Colonic mucosa (tissue), 4 donors: ENCODE measurements at regions of chr19 and their contacts with region 1.

Region 1: GRCh38 chr19:35468637-35469036 is 20.6 kb downstream of the FFAR2 start:
- DNase-seq: peak; percentile 45
- H3K4me3 ChIP-seq: no peak overlapping the region
- H3K27ac ChIP-seq: no peak overlapping the region
- H3K4me1 ChIP-seq: no peaks in the 10 kb centered on the region
- H3K27me3 ChIP-seq: no peaks in the 10 kb centered on the region
- CTCF ChIP-seq: peak; percentile 57

Region 2: DNA sequence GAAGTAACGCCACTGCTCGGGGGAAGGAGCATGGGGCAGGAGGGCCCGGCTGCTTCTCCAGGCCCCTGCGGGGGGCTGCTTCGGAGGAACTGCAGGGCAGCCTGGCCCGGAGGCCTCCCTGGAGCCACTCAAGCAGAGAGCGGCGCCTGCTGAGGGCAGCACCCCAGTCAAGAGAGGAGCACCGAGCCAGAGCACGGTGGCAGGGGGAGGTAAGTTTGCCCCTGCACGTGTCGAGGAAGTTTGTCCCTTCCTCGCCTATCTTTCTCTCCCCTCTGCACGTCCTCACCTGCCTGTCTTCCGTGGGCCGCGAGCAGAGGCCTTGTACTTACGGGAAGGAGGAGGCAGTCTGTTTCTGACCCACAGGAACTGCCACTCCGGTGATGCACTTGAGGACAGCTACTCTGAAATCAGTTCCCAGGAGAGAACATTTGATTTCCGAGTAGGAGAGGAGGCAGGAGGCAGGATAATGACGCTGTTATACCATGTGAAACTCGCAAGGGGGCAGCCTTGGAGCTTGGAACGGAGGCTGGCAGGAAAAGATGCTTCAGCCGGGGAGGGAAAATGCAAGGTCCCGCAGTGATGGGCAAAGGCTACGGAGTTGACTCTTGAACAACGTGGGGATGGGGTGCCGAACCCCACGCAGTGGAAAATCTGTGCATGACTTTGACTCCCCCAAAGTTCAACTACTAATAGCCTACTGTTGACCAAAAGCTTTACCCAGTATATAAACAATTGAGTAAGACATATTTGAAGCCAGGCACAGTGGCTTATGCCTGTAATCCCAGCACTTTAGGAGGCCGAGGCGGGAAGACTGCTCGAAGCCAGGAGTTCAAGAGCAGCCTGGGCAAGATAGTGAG is 116.0 kb before region 1 on chr19:
- intact Hi-C with region 1: loop called (anchors 2 kb)
- DNase-seq: peak; percentile 74
- H3K4me3 ChIP-seq: no peak overlapping the region
- H3K27ac ChIP-seq: no peak overlapping the region
- H3K4me1 ChIP-seq: no peaks in the 10 kb centered on the region
- H3K27me3 ChIP-seq: no peaks in the 10 kb centered on the region
- CTCF ChIP-seq: peak; percentile 64

Region 3: GRCh38 chr19:35421362-35421761 is 47.3 kb before region 1 on chr19:
- intact Hi-C with region 1: loop called (anchors 5 kb)
- DNase-seq: no peak
- H3K4me3 ChIP-seq: no peak overlapping the region
- H3K27ac ChIP-seq: no peak overlapping the region
- H3K4me1 ChIP-seq: peaks cover 7% of the 10 kb centered on the region
- H3K27me3 ChIP-seq: no peaks in the 10 kb centered on the region
- CTCF ChIP-seq: no peak